ENCODE measurements at regions of chr4 and their contacts with region 1.

Region 1: GRCh38 chr4:152640058-152640833 is 39.6 kb downstream of the TMEM154 start:
- DNase-seq: no peak
- ATAC-seq: peak; percentile 36 to 64

Region 2: DNA sequence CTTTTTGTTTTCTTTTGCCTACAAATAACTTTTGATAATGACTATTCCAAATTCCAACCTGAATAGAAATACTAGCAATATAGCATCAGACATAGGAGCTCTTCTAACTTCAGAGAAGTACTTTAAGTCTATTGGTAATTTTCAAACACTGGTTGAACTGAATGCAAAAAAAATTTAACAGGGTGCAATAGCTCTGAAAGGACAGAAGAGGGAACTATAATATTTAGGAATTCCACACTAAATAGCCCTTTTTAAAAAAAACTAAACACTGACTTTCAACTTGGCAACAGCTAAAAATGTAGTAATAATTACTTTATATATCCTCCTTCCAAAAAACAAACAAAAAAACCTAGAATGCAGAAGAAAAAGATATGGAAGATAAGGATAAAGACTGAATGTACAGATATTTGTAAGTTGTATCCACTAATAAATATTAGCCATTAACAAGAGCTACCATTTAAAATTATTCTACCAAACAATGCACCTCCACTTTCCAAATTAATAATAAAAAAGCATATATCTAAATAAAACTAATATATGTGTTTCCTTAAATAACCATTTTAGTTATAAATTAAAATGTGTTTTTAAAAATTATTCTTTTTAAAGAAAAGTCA is 185.7 kb before region 1 on chr4:
- intact Hi-C with region 1: loop called in 1 of 2 experiments (anchors 10 kb)
- DNase-seq: no peak
- ATAC-seq: no peak

Region 3: DNA sequence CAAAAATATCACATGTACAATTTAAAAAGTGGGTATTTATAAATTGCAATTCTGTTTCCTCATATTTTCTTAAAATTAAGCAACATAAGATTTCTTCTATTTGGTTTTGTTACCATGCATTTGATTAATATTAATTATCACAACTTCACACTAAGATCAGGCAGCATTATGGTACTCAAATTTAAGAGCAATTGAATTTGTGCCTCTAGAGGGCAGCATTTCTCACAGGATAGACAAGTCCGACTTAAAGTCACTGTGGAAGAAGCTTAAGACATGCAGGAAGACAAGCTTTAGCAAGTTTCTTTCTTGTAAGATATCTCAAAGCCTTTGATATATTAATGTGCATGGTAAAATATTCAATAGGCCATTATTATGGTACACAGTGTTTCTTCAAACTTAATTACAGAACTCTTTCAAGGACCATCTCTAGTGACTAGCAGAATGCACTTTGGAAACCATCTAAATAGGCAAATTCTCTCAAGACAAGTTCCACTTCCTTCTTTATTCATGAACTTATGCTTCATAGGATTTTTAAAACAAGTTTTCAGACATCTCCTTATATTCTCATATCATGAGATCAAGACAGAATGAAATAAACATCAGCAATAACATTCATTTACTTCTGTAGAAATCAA is 139.3 kb before region 1 on chr4:
- intact Hi-C with region 1: loop called (anchors 2 to 10 kb)
- DNase-seq: no peak
- ATAC-seq: peak; percentile 72

Region 4: DNA sequence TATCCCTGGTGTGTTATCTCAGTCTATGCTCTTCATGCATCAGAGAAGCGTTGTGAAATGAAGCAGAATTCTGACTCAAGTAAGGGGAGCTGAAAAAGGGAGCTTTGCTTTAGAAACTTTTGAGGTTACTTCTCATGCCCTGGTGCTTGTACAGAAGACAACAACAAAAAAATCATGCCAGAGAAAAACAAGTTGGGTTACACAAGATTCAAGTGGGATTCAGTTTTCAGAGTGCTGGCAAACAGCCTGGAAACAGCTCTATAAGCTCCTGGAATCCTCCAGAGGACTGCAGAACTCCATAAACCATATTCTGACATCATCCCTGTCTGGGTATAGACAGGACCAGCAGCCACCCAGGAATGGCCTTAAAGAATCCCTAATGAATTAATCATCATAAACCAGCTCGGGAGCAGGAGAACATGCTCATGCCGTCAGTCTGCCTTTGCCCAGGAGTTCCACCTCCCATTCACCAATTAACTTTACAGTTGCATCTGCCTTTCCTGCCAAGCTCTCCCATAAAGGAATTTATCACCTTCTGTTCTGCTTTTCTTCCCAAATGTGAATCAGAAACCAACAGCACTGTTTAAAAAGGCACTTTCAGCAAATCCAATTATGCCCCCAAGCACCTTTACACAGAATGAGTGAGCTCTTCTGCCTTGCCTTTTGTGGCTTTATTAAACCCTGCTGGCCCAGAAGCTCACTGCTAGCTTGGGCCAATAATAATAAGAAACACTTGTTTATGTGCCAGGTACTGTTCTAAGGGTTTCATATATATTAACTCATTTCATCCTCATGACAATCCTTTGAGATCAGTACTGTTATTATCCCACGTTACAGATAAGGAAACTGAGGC is 49.8 kb before region 1 on chr4:
- intact Hi-C with region 1: no loop called
- DNase-seq: no peak
- ATAC-seq: peak in 1 of 2 donors; percentile 88

Region 5: GRCh38 chr4:152735396-152735859 is 95.2 kb after region 1 on chr4:
- intact Hi-C with region 1: loop called in 1 of 2 experiments (anchors 5 kb)
- DNase-seq: no peak
- ATAC-seq: peak; percentile 42 to 44

Region 6: GRCh38 chr4:152843481-152844090 is 203.3 kb after region 1 on chr4:
- intact Hi-C with region 1: no loop called
- DNase-seq: no peak
- ATAC-seq: no peak